H1 (cell line): ENCODE measurements at regions of chr17 and their contacts with region 1.

Region 1: GRCh38 chr17:44864866-44865660 is 17.4 kb downstream of the HIGD1B start:
- DNase-seq: peak; percentile 15 to 83
- H3K4me3 ChIP-seq: no peak overlapping the region
- H3K27ac ChIP-seq: no peak overlapping the region
- H3K4me1 ChIP-seq: no peaks in the 10 kb centered on the region
- H3K27me3 ChIP-seq: no peaks in the 10 kb centered on the region
- CTCF ChIP-seq: peak; percentile 46 to 86 (median 78)
- EP300 ChIP-seq: no peak
- POLR2A ChIP-seq: no peak
- RAD21 ChIP-seq: peak; percentile 71 to 79

Region 2: DNA sequence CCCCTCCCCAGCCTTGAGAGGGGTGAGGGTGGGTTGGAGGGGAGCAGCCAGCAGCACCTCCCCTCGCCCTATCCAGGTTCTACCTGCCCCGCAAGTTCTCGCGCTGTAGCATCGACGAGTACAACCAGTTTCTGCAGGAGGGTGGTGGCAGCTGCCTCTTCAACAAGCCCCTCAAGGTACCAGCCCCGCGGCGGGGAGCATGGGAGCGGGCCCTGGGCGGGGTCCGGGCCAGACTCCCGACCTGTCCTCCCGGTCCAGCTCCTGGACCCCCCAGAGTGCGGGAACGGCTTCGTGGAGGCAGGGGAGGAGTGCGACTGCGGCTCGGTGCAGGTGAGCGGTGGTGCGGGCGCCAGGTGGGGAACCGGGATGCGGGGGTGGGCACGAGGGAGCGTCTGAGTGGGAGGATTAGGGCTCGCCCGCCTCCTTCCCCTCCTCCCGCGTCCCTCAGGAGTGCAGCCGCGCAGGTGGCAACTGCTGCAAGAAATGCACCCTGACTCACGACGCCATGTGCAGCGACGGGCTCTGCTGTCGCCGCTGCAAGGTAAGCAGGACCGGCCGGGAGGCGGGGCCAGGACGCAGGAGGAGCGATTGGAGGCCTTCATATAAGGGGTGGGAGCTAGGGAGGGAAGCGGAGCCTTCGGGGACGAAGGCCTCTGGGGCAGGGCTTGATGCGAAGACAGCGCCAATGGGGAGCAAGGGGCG is 89.8 kb before region 1 on chr17:
- CTCF ChIA-PET with region 1: interaction called, 577 read pairs
- POLR2A ChIA-PET with region 1: interaction called, 5 read pairs
- DNase-seq: peak; percentile 99
- H3K4me3 ChIP-seq: peak overlapping the region; percentile 45 to 76 (median 59)
- H3K27ac ChIP-seq: no peak overlapping the region
- H3K4me1 ChIP-seq: peaks cover 0 to 14% (median 4%) of the 10 kb centered on the region in 4 experiments; a peak in 5 of 7 replicates
- H3K27me3 ChIP-seq: peaks cover 3 to 18% (median 12%) of the 10 kb centered on the region in 4 experiments; a peak in 6 of 7 replicates
- CTCF ChIP-seq: no peak
- EP300 ChIP-seq: no peak
- POLR2A ChIP-seq: peak in 1 of 2 experiments; percentile 54; a peak in 2 of 3 replicates
- RAD21 ChIP-seq: no peak

Region 3: GRCh38 chr17:44829523-44830358 is 35.3 kb before region 1 on chr17 and contains the start of gene GJC1:
- CTCF ChIA-PET with region 1: interaction called, 38 read pairs
- POLR2A ChIA-PET with region 1: interaction called, 7 read pairs
- DNase-seq: peak in 1 of 2 experiments; percentile 83
- H3K4me3 ChIP-seq: peak within 1 kb of the TSS; percentile 79 to 97 (median 92)
- H3K27ac ChIP-seq: peak within 1 kb of the TSS; percentile 86
- H3K4me1 ChIP-seq: peaks cover 0 to 7% (median 5%) of the 10 kb centered on the region in 4 experiments; a peak in 4 of 7 replicates
- H3K27me3 ChIP-seq: no peaks in the 10 kb centered on the region
- CTCF ChIP-seq: no peak
- EP300 ChIP-seq: no peak
- POLR2A ChIP-seq: peak; percentile 44 to 51
- RAD21 ChIP-seq: no peak
- total RNA-seq, gene GJC1: 154 and 156 TPM in 2 replicates

Region 4: DNA sequence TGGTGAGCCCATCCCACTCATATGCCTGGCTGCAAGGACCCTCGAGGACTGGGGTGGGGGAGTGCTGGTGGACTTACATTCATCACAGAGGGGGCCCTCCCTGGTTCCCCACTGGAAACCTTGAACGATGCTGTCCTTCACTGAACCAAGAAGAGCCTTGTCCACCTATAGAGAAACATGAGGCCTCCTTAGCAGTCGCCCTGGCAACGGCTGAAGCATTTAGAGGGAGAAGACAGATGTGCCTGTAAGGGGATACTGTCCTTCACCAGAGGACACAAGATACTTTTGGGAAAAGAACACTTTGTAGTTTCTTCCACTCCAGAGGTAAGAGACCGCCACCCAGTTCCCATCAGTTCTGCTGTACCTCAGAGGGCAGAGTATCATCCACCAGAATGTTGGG is 10.9 kb before region 1 on chr17:
- CTCF ChIA-PET with region 1: interaction called, 142 read pairs
- POLR2A ChIA-PET with region 1: interaction called, 15 read pairs
- DNase-seq: no peak
- H3K4me3 ChIP-seq: no peak overlapping the region
- H3K27ac ChIP-seq: no peak overlapping the region
- H3K4me1 ChIP-seq: no peaks in the 10 kb centered on the region
- H3K27me3 ChIP-seq: no peaks in the 10 kb centered on the region
- CTCF ChIP-seq: no peak
- EP300 ChIP-seq: no peak
- POLR2A ChIP-seq: no peak
- RAD21 ChIP-seq: no peak

Region 5: GRCh38 chr17:44892250-44892649 is 27.2 kb after region 1 on chr17:
- CTCF ChIA-PET with region 1: interaction called, 10 read pairs
- POLR2A ChIA-PET with region 1: no interaction called
- DNase-seq: no peak
- H3K4me3 ChIP-seq: no peak overlapping the region
- H3K27ac ChIP-seq: no peak overlapping the region
- H3K4me1 ChIP-seq: no peaks in the 10 kb centered on the region
- H3K27me3 ChIP-seq: no peaks in the 10 kb centered on the region
- CTCF ChIP-seq: no peak
- EP300 ChIP-seq: no peak
- POLR2A ChIP-seq: no peak
- RAD21 ChIP-seq: no peak